Right ventricle myocardium superior (tissue), 1 donor: ENCODE measurements at regions of chr1 and their contacts with region 1.

Region 1: GRCh38 chr1:99707535-99708142 is 58.8 kb downstream of the FRRS1 start:
- DNase-seq: peak; percentile 71
- ATAC-seq: peak; percentile 92

Region 2: DNA sequence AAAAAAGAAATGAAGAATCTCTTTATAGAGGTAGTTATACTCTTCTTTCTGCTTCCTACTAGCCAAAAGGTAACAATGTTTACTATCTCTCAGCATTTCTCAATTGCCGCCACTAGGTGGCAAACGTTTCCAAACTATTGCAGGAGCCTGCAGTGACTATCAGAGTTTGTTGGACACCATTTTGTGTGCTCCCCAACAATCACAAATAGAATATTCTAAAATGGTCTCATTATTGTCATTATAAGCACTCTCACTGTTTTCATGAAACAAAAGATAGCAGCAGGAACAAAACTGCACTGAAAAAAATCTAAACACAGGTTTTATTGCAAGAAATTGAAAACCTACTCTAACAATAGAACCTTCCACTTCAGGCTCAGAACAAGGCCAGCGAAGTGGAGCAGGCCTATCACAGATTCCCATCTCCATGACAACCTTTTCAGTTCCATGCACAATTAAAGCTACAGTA is 527.3 kb before region 1 on chr1:
- intact Hi-C with region 1: loop called (anchors 5 kb)
- DNase-seq: peak; percentile 53
- ATAC-seq: peak; percentile 97

Region 3: GRCh38 chr1:99315305-99315704 is 392.3 kb before region 1 on chr1:
- intact Hi-C with region 1: no loop called
- DNase-seq: no peak
- ATAC-seq: no peak

Region 4: GRCh38 chr1:99533909-99534637 is 173.6 kb before region 1 on chr1:
- intact Hi-C with region 1: loop called (anchors 10 kb)
- DNase-seq: no peak
- ATAC-seq: peak; percentile 78